Posterior vena cava (tissue), 2 donors: ENCODE measurements at regions of chr13 and their contacts with region 1.

Region 1: DNA sequence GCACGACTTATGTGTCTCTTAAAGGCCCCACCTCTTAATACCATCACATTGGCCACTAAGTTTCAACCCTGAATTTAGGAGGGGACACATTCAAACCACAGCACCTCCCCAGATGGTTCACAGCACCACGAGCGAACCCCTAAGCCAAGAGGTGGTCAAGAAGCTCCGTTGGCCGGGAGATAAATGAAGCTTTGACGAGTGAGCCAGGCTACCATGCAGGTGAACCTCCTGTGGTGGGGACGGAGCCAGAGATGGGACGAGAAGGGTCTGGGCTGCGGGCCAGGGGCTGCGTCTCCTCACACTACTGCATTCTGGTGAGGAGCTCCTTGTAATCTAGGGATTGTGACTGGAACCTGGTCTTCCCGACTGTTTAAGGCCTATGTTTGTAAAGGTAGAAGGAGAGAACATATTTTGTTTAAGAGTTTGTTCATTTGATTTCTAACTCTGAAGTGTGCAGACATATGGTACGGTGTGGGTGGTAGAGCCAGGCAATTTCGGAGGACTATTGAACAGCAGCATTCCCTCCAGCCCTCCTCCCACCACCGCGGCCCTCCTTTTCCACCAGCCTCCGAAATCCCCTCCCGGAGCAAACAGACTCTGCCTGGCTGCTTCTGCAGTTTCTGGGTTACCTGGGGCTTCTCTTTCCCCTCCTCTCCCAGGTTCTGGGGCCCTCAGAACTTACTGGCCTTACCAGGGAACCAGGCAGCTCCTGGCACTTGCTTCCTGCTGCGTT is 31.3 kb downstream of the SIAH3 start:
- DNase-seq: no peak

Region 2: DNA sequence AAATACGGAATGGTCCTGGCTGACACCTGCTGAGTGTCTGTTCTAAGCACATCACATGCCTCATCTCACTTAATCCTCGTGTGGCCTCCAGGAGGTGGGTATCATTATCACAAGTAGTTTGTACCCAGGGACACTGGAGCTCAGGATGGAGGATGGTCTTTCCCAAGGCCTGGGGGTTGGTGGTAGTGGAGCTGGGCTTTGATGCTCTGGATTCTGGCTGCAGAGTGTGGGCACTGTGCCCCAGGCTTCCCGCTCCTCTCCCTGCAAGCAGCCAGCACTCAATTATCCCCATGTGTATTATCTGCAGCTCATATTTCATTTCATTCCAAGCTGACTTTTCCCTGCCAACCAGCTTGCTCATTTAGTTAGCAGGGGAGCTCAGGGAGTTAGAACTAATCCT is 20.8 kb before region 1 on chr13:
- intact Hi-C with region 1: loop called in 1 of 2 experiments (anchors 1 kb)
- DNase-seq: no peak